RWPE1 (cell line): ENCODE measurements at regions of chr4 and their contacts with region 1.

Region 1: GRCh38 chr4:165343353-165344191 is 16.1 kb downstream of the MSMO1 start:
- DNase-seq: no peak
- H3K27ac ChIP-seq: no peak overlapping the region
- CTCF ChIP-seq: peak; percentile 36

Region 2: GRCh38 chr4:165096776-165097175 is 246.8 kb before region 1 on chr4:
- CTCF ChIA-PET with region 1: interaction called, 10 read pairs
- POLR2A ChIA-PET with region 1: no interaction called
- DNase-seq: peak; percentile 25
- H3K27ac ChIP-seq: no peak overlapping the region
- CTCF ChIP-seq: peak; percentile 50

Region 3: GRCh38 chr4:165131247-165131832 is 212.2 kb before region 1 on chr4:
- CTCF ChIA-PET with region 1: interaction called, 38 read pairs
- POLR2A ChIA-PET with region 1: no interaction called
- DNase-seq: peak; percentile 61
- H3K27ac ChIP-seq: no peak overlapping the region
- CTCF ChIP-seq: peak; percentile 90

Region 4: GRCh38 chr4:165461159-165461821 is 117.7 kb after region 1 on chr4:
- CTCF ChIA-PET with region 1: no interaction called
- POLR2A ChIA-PET with region 1: interaction called, 11 read pairs
- DNase-seq: no peak
- H3K27ac ChIP-seq: no peak overlapping the region
- CTCF ChIP-seq: no peak

Region 5: DNA sequence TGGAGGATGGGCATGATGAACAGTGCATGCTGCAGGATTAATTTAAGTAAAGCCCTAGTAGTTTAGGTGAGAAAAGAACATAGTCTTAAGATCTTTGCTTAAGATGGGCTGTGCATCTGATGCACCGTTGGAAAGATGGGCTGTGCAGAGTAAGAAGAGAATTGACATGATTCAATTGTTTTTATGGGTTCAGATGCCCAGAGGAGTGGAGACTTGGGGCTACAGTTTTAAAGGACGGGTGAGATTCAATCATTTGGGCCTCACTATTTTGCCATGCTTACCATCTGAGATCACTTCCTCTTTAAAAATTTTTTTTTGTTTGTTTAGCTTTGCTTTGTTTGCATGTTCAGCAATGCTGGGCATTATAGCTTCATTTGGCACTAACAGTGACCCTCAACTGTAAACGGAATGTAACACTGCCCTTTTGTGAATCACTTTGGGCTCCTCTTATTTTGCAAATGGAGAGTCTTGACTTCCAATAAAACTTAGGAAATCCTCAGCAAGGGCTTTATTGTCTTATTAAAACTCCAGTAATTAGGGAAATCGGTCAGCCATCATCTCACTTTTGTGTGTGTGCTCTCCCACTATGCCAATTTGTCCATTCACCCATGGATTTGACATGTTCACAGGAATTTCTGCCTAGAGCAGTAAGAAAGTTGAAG is 313.4 kb after region 1 on chr4:
- CTCF ChIA-PET with region 1: no interaction called
- POLR2A ChIA-PET with region 1: no interaction called
- DNase-seq: no peak
- H3K27ac ChIP-seq: no peak overlapping the region
- CTCF ChIP-seq: no peak